CD4-positive, alpha-beta memory T cell (primary cell): ENCODE measurements at regions of chr10 and their contacts with region 1.

Region 1: GRCh38 chr10:28676968-28677887 is at the start of gene BAMBI:
- DNase-seq: peak; percentile 88 to 92 (median 90)
- H3K4me3 ChIP-seq: peak within 1 kb of the TSS; percentile 7 to 49
- H3K4me3 Mint-ChIP-seq: peak within 1 kb of the TSS; percentile 79 to 91 (median 84)
- H3K27ac ChIP-seq: no peak within 1 kb of the TSS
- H3K27ac Mint-ChIP-seq: peak within 1 kb of the TSS in 6 of 7 donors; percentile 11 to 71 (median 46)
- H3K4me1 ChIP-seq: peaks cover 26% of the 10 kb centered on the region
- H3K4me1 Mint-ChIP-seq: peaks cover 14 to 30% (median 22%) of the 10 kb centered on the region in 4 donors
- H3K27me3 ChIP-seq: peaks cover 34% of the 10 kb centered on the region
- H3K27me3 Mint-ChIP-seq: peaks cover 34 to 44% of the 10 kb centered on the region in 2 donors
- total RNA-seq, gene BAMBI: 0.29 TPM in 1 of 2 experiments, not detected in the other

Region 2: DNA sequence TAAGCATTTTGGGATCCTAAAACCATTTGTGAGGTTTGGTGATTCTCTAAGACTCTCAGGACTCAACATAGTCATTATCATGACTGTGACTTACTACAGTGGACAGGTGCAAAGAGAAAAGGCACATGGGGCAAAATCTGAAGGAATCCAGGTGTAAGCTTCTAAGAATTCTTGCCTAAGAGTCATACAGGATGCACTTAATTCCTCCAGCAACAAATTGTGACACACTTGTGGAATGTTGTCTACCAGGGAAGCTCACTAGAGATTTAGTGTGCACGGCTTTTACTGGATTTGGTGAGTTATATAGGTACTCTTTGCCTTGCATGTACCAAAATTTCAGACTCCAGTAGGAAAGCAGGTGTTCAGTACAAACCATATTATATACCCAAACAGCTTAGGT is 96.4 kb before region 1 on chr10:
- CTCF ChIA-PET with region 1: no interaction called
- POLR2A ChIA-PET with region 1: no interaction called
- intact Hi-C with region 1: no loop called
- DNase-seq: no peak
- H3K4me3 ChIP-seq: no peak overlapping the region
- H3K4me3 Mint-ChIP-seq: peak overlapping the region in 1 of 8 donors; percentile 0
- H3K27ac ChIP-seq: no peak overlapping the region
- H3K27ac Mint-ChIP-seq: peak overlapping the region in 6 of 7 donors; percentile 3 to 55 (median 30)
- H3K4me1 ChIP-seq: peaks cover 63% of the 10 kb centered on the region
- H3K4me1 Mint-ChIP-seq: peaks cover 53 to 83% (median 65%) of the 10 kb centered on the region in 4 donors
- H3K27me3 ChIP-seq: no peaks in the 10 kb centered on the region
- H3K27me3 Mint-ChIP-seq: no peaks in the 10 kb centered on the region

Region 3: GRCh38 chr10:28991326-28992270 is 314.4 kb after region 1 on chr10:
- CTCF ChIA-PET with region 1: no interaction called
- POLR2A ChIA-PET with region 1: no interaction called
- intact Hi-C with region 1: loop called (anchors 5 kb)
- DNase-seq: peak in 4 of 5 donors; percentile 6 to 17 (median 12)
- H3K4me3 ChIP-seq: no peak overlapping the region
- H3K4me3 Mint-ChIP-seq: no peak overlapping the region
- H3K27ac ChIP-seq: no peak overlapping the region
- H3K27ac Mint-ChIP-seq: no peak overlapping the region
- H3K4me1 ChIP-seq: no peaks in the 10 kb centered on the region
- H3K4me1 Mint-ChIP-seq: no peaks in the 10 kb centered on the region
- H3K27me3 ChIP-seq: no peaks in the 10 kb centered on the region
- H3K27me3 Mint-ChIP-seq: peaks cover 1 to 7% of the 10 kb centered on the region in 2 donors

Region 4: GRCh38 chr10:29304264-29305030 is 627.2 kb after region 1 on chr10:
- CTCF ChIA-PET with region 1: no interaction called
- POLR2A ChIA-PET with region 1: no interaction called
- intact Hi-C with region 1: loop called (anchors 5 kb)
- DNase-seq: peak in 4 of 5 donors; percentile 6 to 28 (median 16)
- H3K4me3 ChIP-seq: no peak overlapping the region
- H3K4me3 Mint-ChIP-seq: no peak overlapping the region
- H3K27ac ChIP-seq: no peak overlapping the region
- H3K27ac Mint-ChIP-seq: no peak overlapping the region
- H3K4me1 ChIP-seq: no peaks in the 10 kb centered on the region
- H3K4me1 Mint-ChIP-seq: peaks cover 0 to 5% (median 1%) of the 10 kb centered on the region in 4 donors
- H3K27me3 ChIP-seq: no peaks in the 10 kb centered on the region
- H3K27me3 Mint-ChIP-seq: peaks cover 23 to 25% of the 10 kb centered on the region in 2 donors